Activated CD4-positive, alpha-beta T cell treated with anti-CD3 and anti-CD28 coated beads, Interleukin-2, amount 10 ng/mL, durations not matched to agents 7 days and 5 days (primary cell): ENCODE measurements at regions of chr10 and their contacts with region 1.

Region 1: DNA sequence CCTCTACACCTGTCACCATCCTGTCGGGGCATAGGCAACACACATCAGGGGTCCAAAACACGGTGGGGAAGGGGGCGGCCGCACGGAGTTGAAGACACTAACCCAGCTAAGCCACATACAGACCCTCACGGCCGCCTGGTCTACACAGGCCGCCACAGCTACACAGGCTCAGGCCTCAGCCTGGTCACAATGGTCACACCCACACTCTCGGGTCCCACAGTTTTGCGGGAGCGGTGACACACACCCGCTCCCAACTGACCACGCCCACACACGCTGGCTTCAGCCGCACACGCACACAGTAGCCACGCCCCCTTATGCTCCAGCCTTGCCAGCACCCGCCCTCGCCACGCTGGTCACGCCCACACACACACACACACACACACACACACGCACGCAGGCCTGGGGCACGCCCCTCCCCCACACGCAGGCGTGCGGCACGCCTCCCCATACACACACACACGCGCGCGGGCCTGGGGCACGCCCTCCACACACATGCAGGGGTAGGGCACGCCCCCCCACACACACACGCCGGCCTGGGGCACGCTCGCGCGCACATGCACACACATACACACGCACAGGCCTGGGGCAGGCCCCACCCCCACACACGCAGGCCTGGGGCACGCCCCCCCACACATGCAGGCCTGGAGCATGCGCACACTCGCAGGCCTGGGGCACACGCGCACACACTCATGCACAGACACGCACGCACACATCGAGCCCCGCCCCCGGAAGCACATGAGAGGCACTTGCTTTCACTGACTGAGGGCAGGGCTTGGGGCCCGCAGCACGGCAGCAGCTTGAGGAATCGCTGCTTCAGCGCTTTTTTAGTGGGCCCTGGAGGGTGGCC is 12.3 kb upstream of the OGA start:
- DNase-seq: peak; percentile 95
- H3K4me3 Mint-ChIP-seq: peak overlapping the region; percentile 68
- H3K27ac Mint-ChIP-seq: peak overlapping the region; percentile 96
- H3K4me1 Mint-ChIP-seq: peaks cover 58% of the 10 kb centered on the region
- H3K27me3 Mint-ChIP-seq: no peaks in the 10 kb centered on the region

Region 2: DNA sequence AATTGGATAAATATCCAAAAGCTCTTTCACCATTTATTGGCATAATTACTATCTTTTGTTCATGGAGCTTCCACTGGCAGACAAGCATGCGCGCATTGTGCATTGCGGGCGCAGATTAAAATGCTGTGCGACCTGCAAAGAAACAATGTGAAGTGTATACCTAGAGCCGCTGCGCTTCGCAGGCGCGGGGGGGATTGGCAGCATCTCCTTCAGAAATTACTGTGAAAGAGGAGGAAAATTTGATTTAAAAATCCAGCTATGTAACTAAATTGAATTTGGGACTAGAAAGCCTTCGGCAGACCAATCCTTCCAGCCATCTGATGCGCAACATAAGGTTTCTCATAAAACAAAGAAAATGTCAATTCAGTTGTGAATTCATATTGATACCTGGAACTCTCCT is 37.0 kb before region 1 on chr10:
- CTCF ChIA-PET with region 1: no interaction called
- POLR2A ChIA-PET with region 1: no interaction called
- DNase-seq: no peak
- H3K4me3 Mint-ChIP-seq: no peak overlapping the region
- H3K27ac Mint-ChIP-seq: no peak overlapping the region
- H3K4me1 Mint-ChIP-seq: no peaks in the 10 kb centered on the region
- H3K27me3 Mint-ChIP-seq: no peaks in the 10 kb centered on the region

Region 3: DNA sequence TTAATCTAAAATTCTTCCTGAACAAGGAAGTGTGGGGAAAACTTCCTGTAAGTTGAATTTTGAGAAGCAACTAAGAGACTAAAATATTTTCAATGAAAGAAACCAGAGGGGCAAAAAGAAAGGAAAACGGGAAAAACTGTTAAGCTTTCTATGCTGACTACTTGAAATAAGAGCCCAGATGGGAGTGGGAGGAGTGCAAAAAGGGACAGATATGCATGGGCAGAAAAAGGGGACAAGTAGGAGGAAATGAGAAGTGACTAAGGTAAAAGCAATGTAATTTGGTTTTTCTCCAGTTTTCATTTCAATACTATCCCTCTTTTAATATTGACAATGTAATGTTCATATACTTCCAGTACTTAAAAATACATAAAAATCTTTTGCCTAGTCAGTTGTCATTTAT is 23.4 kb before region 1 on chr10:
- CTCF ChIA-PET with region 1: no interaction called
- POLR2A ChIA-PET with region 1: no interaction called
- DNase-seq: no peak
- H3K4me3 Mint-ChIP-seq: no peak overlapping the region
- H3K27ac Mint-ChIP-seq: peak overlapping the region; percentile 9
- H3K4me1 Mint-ChIP-seq: peaks cover 15% of the 10 kb centered on the region
- H3K27me3 Mint-ChIP-seq: no peaks in the 10 kb centered on the region

Region 4: GRCh38 chr10:101818119-101818871 is 12.2 kb before region 1 on chr10 and contains the start of gene OGA:
- CTCF ChIA-PET with region 1: interaction called, 18 read pairs
- POLR2A ChIA-PET with region 1: interaction called, 7 read pairs
- DNase-seq: peak; percentile 99
- H3K4me3 Mint-ChIP-seq: peak within 1 kb of the TSS; percentile 100
- H3K27ac Mint-ChIP-seq: peak within 1 kb of the TSS; percentile 100
- H3K4me1 Mint-ChIP-seq: peaks cover 41% of the 10 kb centered on the region
- H3K27me3 Mint-ChIP-seq: no peaks in the 10 kb centered on the region
- total RNA-seq, gene OGA: 135 to 145 TPM

Region 5: GRCh38 chr10:102009801-102010425 is 179.4 kb after region 1 on chr10:
- CTCF ChIA-PET with region 1: interaction called, 10 read pairs
- POLR2A ChIA-PET with region 1: no interaction called
- DNase-seq: peak; percentile 62
- H3K4me3 Mint-ChIP-seq: no peak overlapping the region
- H3K27ac Mint-ChIP-seq: no peak overlapping the region
- H3K4me1 Mint-ChIP-seq: no peaks in the 10 kb centered on the region
- H3K27me3 Mint-ChIP-seq: no peaks in the 10 kb centered on the region